Cardiac septum (tissue), 1 donor: ENCODE measurements at regions of chr20 and their contacts with region 1.

Region 1: DNA sequence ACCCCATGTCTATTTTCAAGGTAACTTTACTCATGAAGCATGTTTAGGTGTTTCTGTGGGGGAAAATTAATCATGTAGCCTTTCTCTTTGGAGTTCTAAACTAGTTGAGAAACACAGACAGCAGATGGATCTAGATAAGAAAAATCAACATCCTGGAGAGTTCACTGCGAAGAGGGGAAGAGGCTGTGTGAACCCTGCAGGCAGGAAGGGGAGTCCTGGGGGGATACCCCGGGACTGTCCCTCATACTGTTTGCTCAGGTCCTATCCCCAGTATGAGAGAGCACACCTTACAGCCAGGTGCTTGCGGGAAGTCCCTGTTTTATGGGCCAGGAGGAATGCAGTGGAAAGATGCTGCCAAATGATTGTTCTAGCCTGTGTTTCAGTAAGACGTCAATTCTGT is 32.7 kb downstream of the CHMP4B start:
- DNase-seq: no peak

Region 2: DNA sequence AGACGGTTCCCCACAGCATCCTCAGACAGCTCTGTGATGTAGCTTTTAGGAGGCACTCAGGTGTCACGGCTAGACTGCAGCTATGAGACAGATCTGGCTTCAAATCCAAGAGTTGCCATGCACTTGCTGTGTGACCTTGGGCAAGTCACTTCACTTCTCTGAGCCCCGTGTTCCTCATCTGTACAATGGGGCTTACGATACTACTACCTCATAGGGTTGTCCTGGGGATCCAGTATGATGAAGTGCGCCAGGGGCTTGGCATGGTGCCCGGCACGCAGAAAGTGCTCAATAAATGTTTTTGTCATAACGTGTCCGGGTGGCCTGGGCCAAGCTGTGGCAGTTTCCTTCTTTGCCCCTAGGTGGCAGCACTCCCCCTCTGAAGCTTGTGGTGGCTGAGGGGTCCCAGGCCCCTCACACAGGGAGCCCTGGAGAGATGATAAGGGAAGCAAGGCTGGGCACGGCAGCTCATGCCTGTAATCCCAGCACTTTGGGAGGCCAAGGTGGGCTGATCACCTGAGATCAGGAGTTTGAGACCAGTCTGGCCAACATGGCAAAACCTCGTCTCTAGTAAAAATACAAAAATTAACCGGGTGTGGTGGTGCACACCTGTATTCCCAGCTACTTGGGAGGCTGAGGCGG is 51.8 kb before region 1 on chr20:
- intact Hi-C with region 1: loop called (anchors 5 kb)
- DNase-seq: peak; percentile 77

Region 3: GRCh38 chr20:33897313-33897912 is 53.6 kb after region 1 on chr20:
- intact Hi-C with region 1: no loop called
- DNase-seq: no peak

Region 4: GRCh38 chr20:34200023-34200422 is 356.2 kb after region 1 on chr20:
- intact Hi-C with region 1: no loop called
- DNase-seq: no peak